Right cardiac atrium (tissue), 5 donors: ENCODE measurements at regions of chr2 and their contacts with region 1.

Region 1: DNA sequence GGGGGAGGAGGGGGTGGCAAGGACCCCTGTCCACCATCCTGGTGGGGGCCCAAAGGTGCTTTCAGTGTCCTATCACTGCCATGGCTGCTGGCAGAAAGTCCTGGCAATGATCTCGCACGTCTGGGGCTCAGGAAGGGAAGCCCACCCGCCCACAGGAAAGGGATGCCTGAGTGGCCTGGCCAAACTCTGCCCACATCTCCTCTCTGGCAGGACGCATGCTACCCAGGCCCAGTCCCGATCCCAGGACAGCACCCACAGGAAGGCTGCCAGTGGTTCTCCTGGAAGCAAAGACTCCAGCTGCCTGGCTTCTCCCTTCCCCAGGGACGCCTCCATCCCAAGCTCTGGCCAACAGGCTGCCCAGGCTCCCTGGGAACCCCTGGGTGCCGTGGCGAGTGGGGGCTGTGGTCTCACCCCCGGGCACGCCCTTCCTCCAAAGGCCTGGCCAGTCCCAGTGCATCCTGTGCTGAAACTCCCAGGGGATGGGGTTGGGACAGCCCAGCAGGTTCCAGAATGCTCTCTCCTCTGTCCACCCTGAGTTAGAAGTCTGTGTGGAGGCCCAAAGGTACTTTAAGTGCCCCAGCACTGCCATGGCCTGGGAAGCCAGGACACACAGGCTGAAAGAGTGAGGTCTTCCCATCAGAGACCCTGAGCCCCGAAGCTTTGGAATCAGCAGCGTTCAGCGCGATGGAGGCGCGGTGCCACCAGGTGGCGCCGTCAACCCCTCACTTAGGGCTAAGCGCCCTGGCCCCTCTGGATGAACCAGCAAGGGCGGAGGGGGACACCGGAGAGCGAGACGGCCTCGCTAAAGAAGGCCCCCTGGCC is 29.8 kb upstream of the TAF1B start:
- DNase-seq: peak; percentile 74 to 91 (median 91)
- ATAC-seq: peak; percentile 80 to 88
- H3K4me3 ChIP-seq: no peak overlapping the region
- H3K27ac ChIP-seq: no peak overlapping the region
- H3K4me1 ChIP-seq: no peaks in the 10 kb centered on the region
- H3K27me3 ChIP-seq: no peaks in the 10 kb centered on the region

Region 2: GRCh38 chr2:10097352-10098148 is 284.0 kb after region 1 on chr2:
- intact Hi-C with region 1: loop called in 1 of 4 experiments (anchors 10 kb)
- DNase-seq: peak; percentile 74 to 89 (median 87)
- ATAC-seq: peak; percentile 89 to 94
- H3K4me3 ChIP-seq: no peak overlapping the region
- H3K27ac ChIP-seq: no peak overlapping the region
- H3K4me1 ChIP-seq: no peaks in the 10 kb centered on the region
- H3K27me3 ChIP-seq: no peaks in the 10 kb centered on the region